ENCODE measurements at regions of chr12 and their contacts with region 1.

Region 1: DNA sequence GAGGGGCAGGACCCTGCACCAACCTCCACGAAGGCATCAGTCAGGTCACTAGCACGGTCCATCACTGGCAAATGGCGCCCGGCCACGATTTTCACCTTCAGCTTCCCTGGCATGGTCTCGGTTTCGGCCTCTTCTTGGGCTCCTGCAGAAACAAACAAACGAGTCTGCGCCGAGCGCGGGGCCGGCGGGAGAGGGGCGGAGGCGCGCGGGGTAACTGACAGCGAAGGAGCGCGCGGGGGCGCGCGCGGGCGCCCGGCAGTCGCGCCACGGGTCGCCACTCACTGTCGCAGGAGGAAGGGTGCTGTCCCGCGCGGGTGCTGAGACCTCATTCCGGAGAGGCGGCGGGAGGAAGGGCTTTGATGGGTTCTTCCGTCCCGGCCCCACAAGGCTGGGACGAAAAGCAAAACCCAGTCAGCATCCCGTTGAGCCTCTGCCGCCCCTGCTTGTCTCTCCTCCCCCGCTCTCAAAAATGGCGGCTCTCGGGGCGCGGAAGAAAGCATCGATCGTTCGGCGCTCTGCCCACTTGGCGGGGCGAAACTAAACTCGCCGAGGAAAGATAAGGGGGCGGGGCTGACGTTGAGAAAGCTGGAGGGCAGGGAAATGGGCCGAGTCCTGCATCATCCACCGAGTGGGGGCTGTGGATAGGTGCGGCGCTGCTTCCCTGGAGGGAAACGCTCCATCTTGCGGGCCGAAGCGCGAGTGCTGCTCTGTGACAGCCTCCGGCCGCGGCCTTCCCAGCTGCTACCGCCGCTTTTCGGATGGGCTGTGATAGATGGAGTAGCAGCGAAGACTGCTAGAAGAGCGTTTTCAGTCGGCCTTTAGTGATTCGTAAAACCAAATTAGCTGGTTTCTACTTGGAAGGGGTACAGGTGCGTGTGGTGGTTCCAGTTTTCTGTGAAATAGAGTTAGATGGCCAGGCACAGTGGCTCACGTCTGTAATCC is at the start of gene C2CD5:
- DNase-seq: peak; percentile 97 to 99 (median 98)
- ATAC-seq: peak; percentile 95 to 98 (median 97)
- H3K4me3 ChIP-seq: peak within 1 kb of the TSS; percentile 71 to 97 (median 88)
- H3K27ac ChIP-seq: peak within 1 kb of the TSS; percentile 92 to 99 (median 96)
- H3K4me1 ChIP-seq: peaks cover 0 to 62% (median 23%) of the 10 kb centered on the region in 12 donors
- H3K27me3 ChIP-seq: no peaks in the 10 kb centered on the region
- CTCF ChIP-seq: peak in 11 of 12 donors; percentile 12 to 48 (median 35)
- POLR2A ChIP-seq: peak in 1 of 2 donors; percentile 87
- total RNA-seq, gene C2CD5: 11.4 to 28.0 (median 20.6) TPM

Region 2: GRCh38 chr12:22491034-22491433 is 53.3 kb before region 1 on chr12:
- intact Hi-C with region 1: no loop called
- DNase-seq: no peak
- ATAC-seq: no peak
- H3K4me3 ChIP-seq: no peak overlapping the region
- H3K27ac ChIP-seq: no peak overlapping the region
- H3K4me1 ChIP-seq: peaks cover 0 to 6% (median 0%) of the 10 kb centered on the region in 12 donors
- H3K27me3 ChIP-seq: no peaks in the 10 kb centered on the region
- CTCF ChIP-seq: no peak
- POLR2A ChIP-seq: no peak

Region 3: DNA sequence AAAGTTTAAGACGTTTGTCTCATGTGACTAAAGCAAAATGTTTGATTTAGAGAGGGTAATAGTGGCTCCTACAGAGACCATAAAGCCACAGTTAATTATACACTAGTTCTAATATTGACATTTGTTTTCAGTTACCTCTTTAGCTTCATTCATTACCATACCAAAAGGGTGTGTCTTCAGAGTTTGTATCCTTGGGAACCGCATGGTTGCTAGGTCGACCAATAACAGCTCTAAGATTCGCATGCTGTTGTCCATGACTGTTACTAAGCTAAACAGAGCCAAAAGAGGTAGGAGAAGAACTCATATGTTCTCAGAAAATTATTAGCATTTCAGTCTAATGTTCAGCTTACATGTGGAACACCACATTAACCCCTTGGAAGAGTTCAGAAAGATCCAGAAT is 44.5 kb after region 1 on chr12:
- intact Hi-C with region 1: no loop called
- DNase-seq: no peak
- ATAC-seq: no peak
- H3K4me3 ChIP-seq: no peak overlapping the region
- H3K27ac ChIP-seq: no peak overlapping the region
- H3K4me1 ChIP-seq: no peaks in the 10 kb centered on the region
- H3K27me3 ChIP-seq: no peaks in the 10 kb centered on the region
- CTCF ChIP-seq: no peak
- POLR2A ChIP-seq: no peak

Region 4: DNA sequence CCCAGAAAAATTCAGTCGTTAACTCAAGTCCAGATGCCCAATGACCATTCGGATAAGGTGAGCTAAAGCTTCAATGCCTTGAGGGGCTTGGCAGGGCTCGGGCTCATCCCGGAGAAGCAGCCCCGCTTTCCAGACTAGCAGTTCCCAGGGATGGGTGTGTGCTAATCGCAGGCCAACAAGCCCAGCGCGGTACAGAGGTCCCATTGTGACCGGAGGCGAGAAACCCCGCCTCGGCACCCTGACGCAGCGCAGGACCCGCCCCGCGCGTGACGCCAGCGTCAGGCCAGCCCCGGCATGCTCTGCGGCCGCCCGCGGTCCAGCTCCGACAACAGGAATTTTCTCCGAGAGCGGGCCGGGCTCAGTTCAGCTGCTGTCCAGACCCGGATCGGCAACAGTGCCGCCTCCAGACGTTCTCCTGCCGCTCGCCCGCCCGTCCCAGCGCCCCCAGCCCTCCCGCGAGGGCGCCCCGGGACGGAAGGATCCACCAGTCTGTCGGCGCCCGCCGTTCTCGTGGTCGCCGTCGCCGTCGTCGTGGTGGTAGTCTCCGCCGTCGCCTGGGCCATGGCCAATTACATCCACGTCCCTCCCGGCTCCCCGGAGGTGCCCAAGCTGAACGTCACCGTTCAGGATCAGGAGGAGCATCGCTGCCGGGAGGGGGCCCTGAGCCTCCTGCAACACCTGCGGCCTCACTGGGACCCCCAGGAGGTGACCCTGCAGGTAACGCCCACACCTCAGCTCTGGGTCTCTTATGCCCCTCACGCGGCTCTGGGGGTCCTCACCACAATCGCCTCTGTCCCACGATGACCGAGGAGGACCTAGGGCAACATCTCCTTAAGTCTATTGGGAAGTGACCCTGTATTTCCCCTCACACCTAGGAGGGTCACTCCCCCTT is 80.8 kb after region 1 on chr12 and contains the start of gene ETNK1:
- intact Hi-C with region 1: loop called (anchors 1 to 5 kb)
- DNase-seq: peak; percentile 96 to 97 (median 96)
- ATAC-seq: peak; percentile 99 to 100 (median 100)
- H3K4me3 ChIP-seq: peak within 1 kb of the TSS; percentile 63 to 95 (median 87)
- H3K27ac ChIP-seq: peak within 1 kb of the TSS; percentile 89 to 98 (median 96)
- H3K4me1 ChIP-seq: peaks cover 0 to 44% (median 30%) of the 10 kb centered on the region in 12 donors
- H3K27me3 ChIP-seq: no peaks in the 10 kb centered on the region
- CTCF ChIP-seq: no peak
- POLR2A ChIP-seq: peak; percentile 60 to 95
- total RNA-seq, gene ETNK1: 12.6 to 40.9 (median 17.2) TPM